PC-9 (cell line): ENCODE measurements at regions of chr12 and their contacts with region 1.

Region 1: GRCh38 chr12:65556681-65557437 is 267.4 kb upstream of the HMGA2 start:
- DNase-seq: peak; percentile 63 to 82
- H3K4me3 ChIP-seq: no peak overlapping the region
- H3K27ac ChIP-seq: no peak overlapping the region
- H3K4me1 ChIP-seq: peaks cover 11% of the 10 kb centered on the region
- H3K27me3 ChIP-seq: no peaks in the 10 kb centered on the region
- CTCF ChIP-seq: peak; percentile 91

Region 2: DNA sequence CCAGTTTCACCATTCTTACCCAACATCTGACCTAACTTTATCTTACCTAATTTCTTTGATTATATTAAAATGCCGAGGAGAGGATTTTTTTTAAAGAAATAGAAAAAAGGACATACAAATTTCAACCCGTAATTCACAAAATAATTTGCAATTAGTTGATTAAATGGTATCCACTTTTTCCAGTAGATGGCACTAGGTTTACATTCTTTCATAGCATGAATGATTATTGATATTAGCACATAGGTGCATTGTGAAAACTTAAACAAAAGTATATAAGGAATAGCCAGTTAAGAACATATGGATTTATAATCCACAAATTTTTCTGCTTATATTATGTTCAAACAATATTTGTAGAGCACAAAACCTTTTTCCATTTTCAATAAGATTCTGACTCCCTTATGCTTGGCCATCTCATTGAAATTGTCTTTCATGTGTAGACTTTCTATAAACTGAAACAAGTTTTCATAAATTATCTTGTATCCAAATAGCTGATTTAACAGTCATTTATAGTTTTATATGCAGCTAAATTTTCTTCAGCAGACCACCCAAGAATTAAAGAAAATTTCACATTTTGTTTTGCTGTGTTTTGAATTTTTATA is 243.0 kb before region 1 on chr12:
- CTCF ChIA-PET with region 1: no interaction called
- POLR2A ChIA-PET with region 1: no interaction called
- intact Hi-C with region 1: loop called (anchors 2 kb)
- DNase-seq: no peak
- H3K4me3 ChIP-seq: no peak overlapping the region
- H3K27ac ChIP-seq: no peak overlapping the region
- H3K4me1 ChIP-seq: no peaks in the 10 kb centered on the region
- H3K27me3 ChIP-seq: no peaks in the 10 kb centered on the region
- CTCF ChIP-seq: peak; percentile 76

Region 3: GRCh38 chr12:65460063-65460462 is 96.8 kb before region 1 on chr12:
- CTCF ChIA-PET with region 1: no interaction called
- POLR2A ChIA-PET with region 1: no interaction called
- intact Hi-C with region 1: no loop called
- DNase-seq: no peak
- H3K4me3 ChIP-seq: no peak overlapping the region
- H3K27ac ChIP-seq: no peak overlapping the region
- H3K4me1 ChIP-seq: no peaks in the 10 kb centered on the region
- H3K27me3 ChIP-seq: no peaks in the 10 kb centered on the region
- CTCF ChIP-seq: no peak

Region 4: GRCh38 chr12:65685514-65685913 is 128.7 kb after region 1 on chr12:
- CTCF ChIA-PET with region 1: no interaction called
- POLR2A ChIA-PET with region 1: no interaction called
- intact Hi-C with region 1: loop called (anchors 2 kb)
- DNase-seq: peak in 1 of 2 experiments; percentile 45
- H3K4me3 ChIP-seq: no peak overlapping the region
- H3K27ac ChIP-seq: no peak overlapping the region
- H3K4me1 ChIP-seq: no peaks in the 10 kb centered on the region
- H3K27me3 ChIP-seq: no peaks in the 10 kb centered on the region
- CTCF ChIP-seq: peak; percentile 63

Region 5: DNA sequence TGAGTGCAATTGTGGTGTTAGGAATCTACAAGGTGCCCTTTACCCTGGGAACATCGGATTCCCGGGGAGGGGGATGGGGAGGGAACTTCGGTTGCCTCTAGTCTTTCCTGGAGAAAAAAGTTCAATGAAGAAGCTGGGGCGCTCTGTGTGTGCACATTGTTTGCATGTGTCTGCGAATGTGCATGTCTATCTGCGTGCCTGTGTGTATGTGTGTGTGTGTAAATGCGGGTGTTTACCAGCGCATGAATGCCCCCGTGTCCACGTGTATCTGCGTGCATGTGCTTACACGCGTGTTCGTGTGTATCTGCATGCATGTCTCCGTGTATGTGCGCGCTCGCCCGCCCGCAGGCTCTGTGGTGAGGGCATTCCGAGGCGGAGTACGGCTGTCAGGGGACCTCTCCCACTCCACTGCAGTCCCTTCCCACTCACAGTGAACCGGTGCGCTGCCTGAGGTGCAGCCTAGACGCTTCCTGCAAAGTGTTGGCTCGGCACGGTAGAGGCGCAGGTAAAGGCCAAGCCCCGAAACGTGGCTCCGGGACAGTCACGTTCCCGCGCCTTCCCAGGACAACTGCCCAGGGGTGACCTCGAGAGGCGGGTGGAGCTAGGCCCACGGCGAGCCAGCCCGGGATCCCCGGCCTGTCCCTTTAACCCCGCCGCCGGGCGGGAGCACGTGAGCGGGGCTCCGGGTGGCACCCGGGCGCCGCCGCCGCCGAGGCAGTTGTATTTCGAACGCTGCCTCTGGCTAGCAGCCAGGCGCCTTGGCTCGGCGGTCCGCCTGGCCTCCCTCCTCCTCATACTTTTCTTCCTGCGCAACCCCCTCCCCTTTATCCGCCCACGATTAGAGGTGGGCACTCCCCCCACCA is 266.9 kb after region 1 on chr12:
- CTCF ChIA-PET with region 1: no interaction called
- POLR2A ChIA-PET with region 1: no interaction called
- intact Hi-C with region 1: loop called (anchors 2 kb)
- DNase-seq: peak; percentile 54 to 61
- H3K4me3 ChIP-seq: peak overlapping the region; percentile 93
- H3K27ac ChIP-seq: peak overlapping the region; percentile 88
- H3K4me1 ChIP-seq: peaks cover 49% of the 10 kb centered on the region
- H3K27me3 ChIP-seq: no peaks in the 10 kb centered on the region
- CTCF ChIP-seq: no peak

Region 6: DNA sequence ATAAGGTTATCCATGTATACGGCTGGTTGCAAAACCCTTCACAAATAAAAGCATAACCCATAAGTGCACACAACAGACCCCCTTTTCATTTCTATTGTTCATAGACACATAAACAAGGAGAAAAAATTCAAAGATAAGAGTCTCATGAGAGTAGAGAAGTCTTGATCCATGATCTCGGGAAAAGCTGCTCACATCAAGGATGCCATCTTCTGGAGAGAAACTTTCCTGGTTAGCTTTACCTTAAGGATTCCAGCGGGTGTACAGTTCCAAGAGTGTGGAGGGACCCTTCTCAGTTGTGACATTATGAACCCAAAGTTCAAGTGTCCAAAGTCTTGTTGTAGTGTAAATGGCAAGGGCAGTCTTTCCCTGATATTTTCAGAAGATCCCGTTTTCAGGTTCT is 429.2 kb after region 1 on chr12:
- CTCF ChIA-PET with region 1: no interaction called
- POLR2A ChIA-PET with region 1: no interaction called
- intact Hi-C with region 1: loop called (anchors 2 kb)
- DNase-seq: peak in 1 of 2 experiments; percentile 32
- H3K4me3 ChIP-seq: no peak overlapping the region
- H3K27ac ChIP-seq: no peak overlapping the region
- H3K4me1 ChIP-seq: no peaks in the 10 kb centered on the region
- H3K27me3 ChIP-seq: no peaks in the 10 kb centered on the region
- CTCF ChIP-seq: no peak

Region 7: GRCh38 chr12:66035288-66035966 is 478.6 kb after region 1 on chr12:
- CTCF ChIA-PET with region 1: no interaction called
- POLR2A ChIA-PET with region 1: no interaction called
- intact Hi-C with region 1: loop called (anchors 2 kb)
- DNase-seq: no peak
- H3K4me3 ChIP-seq: no peak overlapping the region
- H3K27ac ChIP-seq: no peak overlapping the region
- H3K4me1 ChIP-seq: peaks cover 7% of the 10 kb centered on the region; the same call in 1 of the 2 replicates
- H3K27me3 ChIP-seq: no peaks in the 10 kb centered on the region
- CTCF ChIP-seq: peak; percentile 68

Region 8: DNA sequence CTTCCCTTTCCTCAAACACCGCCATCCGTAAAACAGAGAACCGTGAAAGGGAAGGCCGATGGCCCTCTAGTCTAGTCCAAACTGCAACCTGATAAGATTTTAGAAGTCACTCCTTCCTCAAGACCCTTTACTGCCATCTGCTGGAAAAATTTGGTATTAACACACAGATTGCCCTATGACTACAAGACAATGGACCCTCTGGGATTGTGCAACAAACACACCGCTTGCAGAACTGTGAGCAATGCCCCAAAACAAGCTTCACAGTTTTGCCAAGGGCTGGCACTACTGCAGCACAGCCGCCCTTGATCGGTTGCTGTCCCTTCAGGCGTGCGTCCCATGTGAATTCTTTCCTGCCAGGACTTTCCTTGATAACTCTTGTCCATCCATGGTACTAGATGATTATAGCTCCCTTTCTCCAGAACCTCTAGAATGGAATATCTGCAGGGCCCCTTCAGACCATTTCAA is 550.6 kb after region 1 on chr12:
- CTCF ChIA-PET with region 1: no interaction called
- POLR2A ChIA-PET with region 1: no interaction called
- intact Hi-C with region 1: loop called (anchors 5 kb)
- DNase-seq: peak; percentile 52 to 77
- H3K4me3 ChIP-seq: no peak overlapping the region
- H3K27ac ChIP-seq: no peak overlapping the region
- H3K4me1 ChIP-seq: no peaks in the 10 kb centered on the region
- H3K27me3 ChIP-seq: no peaks in the 10 kb centered on the region
- CTCF ChIP-seq: peak; percentile 87